ENCODE measurements at regions of chr12 and their contacts with region 1.

Region 1: DNA sequence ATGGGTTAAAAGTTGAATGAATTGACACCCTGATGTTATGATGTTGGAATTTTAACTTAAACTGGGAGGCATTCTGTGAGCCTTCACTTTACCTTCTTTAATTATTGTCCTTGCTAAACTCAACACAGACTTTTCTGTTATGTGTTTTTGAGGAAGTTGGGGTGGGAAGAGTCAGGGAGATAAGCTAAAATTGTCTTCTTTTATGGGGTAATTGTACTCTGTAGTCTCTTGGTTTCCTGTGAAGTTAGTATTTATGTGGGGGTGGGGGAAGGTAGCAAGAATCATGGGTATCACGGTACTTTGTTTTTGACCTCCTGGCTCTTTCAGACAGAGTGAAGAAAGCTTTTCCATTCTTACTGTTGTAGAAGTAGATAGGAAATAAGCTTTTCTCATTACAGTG is 32.9 kb downstream of the RAB21 start:
- DNase-seq: no peak
- ATAC-seq: peak; percentile 33
- H3K4me3 Mint-ChIP-seq: no peak overlapping the region
- H3K27ac Mint-ChIP-seq: peak overlapping the region; percentile 16
- H3K4me1 Mint-ChIP-seq: peaks cover 11% of the 10 kb centered on the region
- H3K27me3 Mint-ChIP-seq: no peaks in the 10 kb centered on the region

Region 2: GRCh38 chr12:71517145-71517846 is 270.3 kb before region 1 on chr12:
- CTCF ChIA-PET with region 1: no interaction called
- POLR2A ChIA-PET with region 1: interaction called, 12 read pairs
- intact Hi-C with region 1: no loop called
- DNase-seq: no peak
- ATAC-seq: no peak
- H3K4me3 Mint-ChIP-seq: no peak overlapping the region
- H3K27ac Mint-ChIP-seq: no peak overlapping the region
- H3K4me1 Mint-ChIP-seq: no peaks in the 10 kb centered on the region
- H3K27me3 Mint-ChIP-seq: peaks cover 12% of the 10 kb centered on the region

Region 3: GRCh38 chr12:71800177-71800576 is 12.6 kb after region 1 on chr12:
- CTCF ChIA-PET with region 1: no interaction called
- POLR2A ChIA-PET with region 1: interaction called, 4 read pairs
- intact Hi-C with region 1: loop called in 1 of 2 experiments (anchors 1 kb)
- DNase-seq: no peak
- ATAC-seq: no peak
- H3K4me3 Mint-ChIP-seq: no peak overlapping the region
- H3K27ac Mint-ChIP-seq: no peak overlapping the region
- H3K4me1 Mint-ChIP-seq: no peaks in the 10 kb centered on the region
- H3K27me3 Mint-ChIP-seq: peaks cover 2% of the 10 kb centered on the region

Region 4: GRCh38 chr12:72717046-72717445 is 929.5 kb after region 1 on chr12:
- CTCF ChIA-PET with region 1: no interaction called
- POLR2A ChIA-PET with region 1: no interaction called
- intact Hi-C with region 1: no loop called
- DNase-seq: no peak
- ATAC-seq: no peak
- H3K4me3 Mint-ChIP-seq: no peak overlapping the region
- H3K27ac Mint-ChIP-seq: no peak overlapping the region
- H3K4me1 Mint-ChIP-seq: no peaks in the 10 kb centered on the region
- H3K27me3 Mint-ChIP-seq: no peaks in the 10 kb centered on the region

Measured in activated CD4-positive, alpha-beta T cell treated with anti-CD3 and anti-CD28 coated beads for 36 hours (primary cell).